Activated CD4-positive, alpha-beta T cell treated with anti-CD3 and anti-CD28 coated beads for 36 hours (primary cell): ENCODE measurements at regions of chr1 and their contacts with region 1.

Region 1: DNA sequence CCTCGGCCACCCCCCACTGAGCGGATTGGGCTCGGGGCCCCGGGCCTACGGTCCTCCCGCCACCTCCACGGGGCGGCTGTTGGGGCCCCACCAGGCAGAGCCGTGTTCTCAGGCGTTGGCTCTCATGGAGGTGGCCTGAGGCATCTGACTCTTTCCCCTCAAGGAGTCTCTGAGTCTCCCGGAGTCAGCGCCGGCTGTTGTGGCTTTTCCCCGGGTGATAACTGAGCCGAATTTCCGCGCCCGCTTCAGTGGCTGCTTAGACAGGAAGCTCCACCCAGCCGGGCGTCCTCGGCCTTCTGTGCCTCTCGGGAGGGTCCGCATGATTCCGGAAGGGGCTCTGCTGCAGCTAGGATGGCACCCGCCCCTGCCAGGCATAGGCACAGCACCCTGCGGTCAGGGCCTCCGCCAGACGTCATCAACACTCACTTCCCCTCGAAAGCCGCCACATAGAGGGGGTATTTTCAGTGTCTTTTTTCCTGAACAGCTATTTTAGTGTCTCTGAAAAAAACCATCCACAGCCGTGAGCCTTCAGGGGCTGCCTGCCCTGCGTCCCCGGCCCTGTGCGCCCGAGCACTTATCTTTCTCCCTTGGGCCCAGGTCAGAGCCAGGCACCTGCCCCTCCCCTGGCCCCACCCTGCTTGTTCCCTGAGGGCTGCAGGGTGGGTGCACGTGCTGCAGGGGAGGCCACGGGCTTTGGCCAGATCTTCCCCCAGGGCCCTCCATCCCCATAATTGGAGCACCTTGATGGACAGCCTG is 72.9 kb downstream of the SKI start:
- DNase-seq: peak; percentile 95
- ATAC-seq: peak; percentile 81
- H3K4me3 Mint-ChIP-seq: peak overlapping the region; percentile 79
- H3K27ac Mint-ChIP-seq: peak overlapping the region; percentile 95
- H3K4me1 Mint-ChIP-seq: peaks cover 59% of the 10 kb centered on the region
- H3K27me3 Mint-ChIP-seq: no peaks in the 10 kb centered on the region

Region 2: DNA sequence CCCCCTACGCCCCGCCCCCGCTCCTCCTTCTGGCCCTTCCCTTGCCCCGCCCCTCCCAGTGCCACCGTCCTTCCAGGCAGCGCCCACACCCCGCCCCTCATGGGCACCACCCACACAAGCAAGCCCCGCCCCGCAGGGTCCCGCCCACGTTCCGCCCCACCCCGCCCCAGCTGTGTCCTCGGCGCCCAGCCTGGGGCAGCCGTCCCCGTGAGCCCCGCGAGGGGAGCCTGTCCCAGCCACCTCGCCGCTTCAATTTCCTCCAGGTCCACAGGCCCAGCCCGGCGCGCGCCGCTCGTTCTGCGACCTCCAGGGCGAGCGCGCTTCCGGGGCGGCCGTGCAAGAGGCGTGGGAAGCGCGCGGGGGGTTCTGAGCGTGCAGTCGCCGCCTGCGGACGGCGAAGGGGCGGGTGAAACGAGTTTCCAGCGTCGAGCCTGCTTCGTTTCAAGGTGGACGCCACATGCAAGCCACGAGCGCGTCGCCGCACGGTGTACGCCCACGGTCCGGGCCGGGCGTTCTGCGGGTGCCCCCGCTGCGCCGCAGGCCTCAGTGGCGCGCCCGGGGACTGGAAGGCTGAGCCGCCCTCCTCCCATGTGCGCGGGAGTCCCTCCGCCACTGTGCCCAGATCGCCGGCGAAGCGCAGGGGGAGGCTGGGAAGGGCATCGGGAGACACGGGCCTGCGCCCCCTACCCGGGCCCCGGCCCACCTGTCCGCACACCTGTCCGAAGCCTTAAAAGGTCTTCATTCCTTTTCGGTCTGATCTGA is 95.7 kb before region 1 on chr1:
- CTCF ChIA-PET with region 1: no interaction called
- POLR2A ChIA-PET with region 1: no interaction called
- intact Hi-C with region 1: loop called in 1 of 2 experiments (anchors 2 kb)
- DNase-seq: peak; percentile 98
- ATAC-seq: peak; percentile 88
- H3K4me3 Mint-ChIP-seq: peak overlapping the region; percentile 51
- H3K27ac Mint-ChIP-seq: no peak overlapping the region
- H3K4me1 Mint-ChIP-seq: peaks cover 3% of the 10 kb centered on the region
- H3K27me3 Mint-ChIP-seq: no peaks in the 10 kb centered on the region

Region 3: DNA sequence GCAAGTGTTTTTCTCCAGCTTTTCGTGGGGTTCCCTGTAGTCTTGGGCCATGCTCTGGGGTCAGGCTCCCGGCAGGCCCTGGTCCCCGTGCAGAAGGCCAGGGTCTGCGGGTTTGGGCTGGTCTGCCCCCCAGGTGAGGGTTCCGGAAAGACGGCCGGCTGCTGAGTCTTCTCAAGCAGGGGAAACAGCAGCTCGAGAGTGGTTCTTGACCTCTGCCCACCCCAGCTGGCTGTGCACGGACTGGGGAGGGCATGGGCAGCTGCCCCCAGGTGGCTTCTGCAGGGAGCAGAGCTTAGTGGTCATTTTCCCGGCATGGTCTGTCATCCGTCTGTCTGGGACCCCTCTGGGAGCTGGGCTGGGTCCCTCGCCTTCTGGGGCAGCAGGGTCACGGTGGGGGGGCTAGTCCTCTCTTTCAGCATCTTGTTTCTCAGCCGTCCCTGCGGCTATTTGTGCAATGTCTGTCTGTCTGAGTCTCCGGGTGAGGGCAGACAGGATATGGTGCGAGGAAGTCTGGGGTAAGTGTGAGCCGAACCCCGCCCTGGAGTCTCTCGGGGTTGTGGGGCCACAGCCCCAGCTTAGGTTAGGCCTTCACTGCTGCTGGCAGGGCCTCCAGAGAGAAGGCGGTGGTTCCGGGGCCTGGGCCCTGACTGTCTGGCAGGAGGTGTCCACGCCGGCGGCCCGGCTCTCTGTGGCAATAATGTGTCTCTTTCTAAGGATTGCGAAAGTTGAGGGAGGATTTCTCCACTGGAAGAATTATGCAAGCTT is 66.8 kb before region 1 on chr1:
- CTCF ChIA-PET with region 1: interaction called, 3 read pairs
- POLR2A ChIA-PET with region 1: interaction called, 6 read pairs
- intact Hi-C with region 1: loop called (anchors 1 to 2 kb)
- DNase-seq: peak; percentile 81
- ATAC-seq: peak; percentile 73
- H3K4me3 Mint-ChIP-seq: peak overlapping the region; percentile 73
- H3K27ac Mint-ChIP-seq: peak overlapping the region; percentile 90
- H3K4me1 Mint-ChIP-seq: peaks cover 59% of the 10 kb centered on the region
- H3K27me3 Mint-ChIP-seq: no peaks in the 10 kb centered on the region

Region 4: DNA sequence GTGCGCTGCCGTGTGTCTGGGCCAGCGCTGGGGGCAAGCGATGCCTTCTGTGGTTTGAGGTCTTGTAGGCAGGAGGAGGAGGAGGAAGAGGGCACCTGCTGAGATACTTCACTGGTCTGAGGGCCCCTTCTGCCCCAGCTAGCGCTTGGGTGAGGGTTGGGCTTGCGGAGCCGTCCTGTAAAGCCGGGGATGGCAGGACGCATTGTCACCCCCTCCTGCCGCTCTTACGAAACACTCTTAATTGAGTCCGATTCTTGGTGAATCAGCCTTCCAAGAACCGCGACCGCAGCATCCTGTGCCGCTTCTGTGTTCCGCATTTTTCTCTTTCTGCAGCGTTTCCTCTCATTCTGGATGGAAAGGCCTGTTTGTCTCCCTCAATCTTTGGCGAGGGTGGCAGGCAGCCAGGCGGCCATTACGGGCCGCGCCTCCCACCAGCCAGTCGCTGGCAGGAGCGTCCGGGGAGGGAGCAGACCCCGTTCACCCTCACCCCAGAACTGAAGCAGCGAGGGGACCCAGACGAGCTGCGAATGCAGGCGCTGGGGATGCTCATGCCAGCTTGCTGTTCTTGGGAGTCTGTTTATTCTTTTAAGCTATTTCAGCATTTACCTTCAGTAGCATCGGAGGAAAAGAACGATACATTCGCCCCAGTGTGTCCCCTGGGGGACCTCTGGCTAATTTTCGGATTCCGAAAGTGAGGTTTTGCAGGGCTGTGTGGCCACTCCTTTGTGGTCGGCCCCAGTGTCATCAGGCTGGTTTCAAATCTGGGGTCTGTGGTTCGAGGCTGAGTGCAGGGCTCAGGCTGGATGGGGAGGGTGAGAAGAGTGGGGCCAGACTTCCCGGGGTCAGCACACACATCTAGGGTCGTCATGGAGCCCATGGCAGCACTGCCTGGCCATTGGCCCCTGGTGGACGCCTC is 10.2 kb before region 1 on chr1:
- CTCF ChIA-PET with region 1: interaction called, 6 read pairs
- POLR2A ChIA-PET with region 1: interaction called, 19 read pairs
- intact Hi-C with region 1: loop called (anchors 1 kb)
- DNase-seq: peak; percentile 94
- ATAC-seq: peak; percentile 89
- H3K4me3 Mint-ChIP-seq: peak overlapping the region; percentile 75
- H3K27ac Mint-ChIP-seq: peak overlapping the region; percentile 95
- H3K4me1 Mint-ChIP-seq: peaks cover 87% of the 10 kb centered on the region
- H3K27me3 Mint-ChIP-seq: no peaks in the 10 kb centered on the region